Right cardiac atrium (tissue), 5 donors: ENCODE measurements at regions of chr4 and their contacts with region 1.

Region 1: GRCh38 chr4:143482840-143483239 is 30.7 kb upstream of the SMARCA5 start:
- DNase-seq: no peak
- ATAC-seq: peak in 1 of 2 donors; percentile 59
- H3K4me3 ChIP-seq: no peak overlapping the region
- H3K27ac ChIP-seq: no peak overlapping the region
- H3K4me1 ChIP-seq: no peaks in the 10 kb centered on the region
- H3K27me3 ChIP-seq: no peaks in the 10 kb centered on the region

Region 2: GRCh38 chr4:143207557-143207956 is 275.3 kb before region 1 on chr4:
- intact Hi-C with region 1: loop called (anchors 5 to 10 kb)
- DNase-seq: no peak
- ATAC-seq: peak; percentile 62 to 63
- H3K4me3 ChIP-seq: no peak overlapping the region
- H3K27ac ChIP-seq: no peak overlapping the region
- H3K4me1 ChIP-seq: no peaks in the 10 kb centered on the region
- H3K27me3 ChIP-seq: no peaks in the 10 kb centered on the region

Region 3: GRCh38 chr4:143626134-143626911 is 143.5 kb after region 1 on chr4:
- intact Hi-C with region 1: no loop called
- DNase-seq: peak; percentile 78 to 92 (median 89)
- ATAC-seq: peak; percentile 96 to 99
- H3K4me3 ChIP-seq: no peak overlapping the region
- H3K27ac ChIP-seq: no peak overlapping the region
- H3K4me1 ChIP-seq: peaks cover 5% of the 10 kb centered on the region
- H3K27me3 ChIP-seq: no peaks in the 10 kb centered on the region